Dendritic cell treated with granulocyte-macrophage colony-stimulating factor and Interleukin-4, amounts not matched to agents 40 ng/mL and 50 ng/mL, for 4 days (primary cell): ENCODE measurements at regions of chr19 and their contacts with region 1.

Region 1: GRCh38 chr19:18919086-18919899 is at the starts of genes COPE and DDX49:
- H3K4me3 Mint-ChIP-seq: peak within 1 kb of the TSS; percentile 86
- H3K27ac Mint-ChIP-seq: peak within 1 kb of the TSS; percentile 96
- H3K4me1 Mint-ChIP-seq: peaks cover 46% of the 10 kb centered on the region
- H3K27me3 Mint-ChIP-seq: no peaks in the 10 kb centered on the region

Region 2: DNA sequence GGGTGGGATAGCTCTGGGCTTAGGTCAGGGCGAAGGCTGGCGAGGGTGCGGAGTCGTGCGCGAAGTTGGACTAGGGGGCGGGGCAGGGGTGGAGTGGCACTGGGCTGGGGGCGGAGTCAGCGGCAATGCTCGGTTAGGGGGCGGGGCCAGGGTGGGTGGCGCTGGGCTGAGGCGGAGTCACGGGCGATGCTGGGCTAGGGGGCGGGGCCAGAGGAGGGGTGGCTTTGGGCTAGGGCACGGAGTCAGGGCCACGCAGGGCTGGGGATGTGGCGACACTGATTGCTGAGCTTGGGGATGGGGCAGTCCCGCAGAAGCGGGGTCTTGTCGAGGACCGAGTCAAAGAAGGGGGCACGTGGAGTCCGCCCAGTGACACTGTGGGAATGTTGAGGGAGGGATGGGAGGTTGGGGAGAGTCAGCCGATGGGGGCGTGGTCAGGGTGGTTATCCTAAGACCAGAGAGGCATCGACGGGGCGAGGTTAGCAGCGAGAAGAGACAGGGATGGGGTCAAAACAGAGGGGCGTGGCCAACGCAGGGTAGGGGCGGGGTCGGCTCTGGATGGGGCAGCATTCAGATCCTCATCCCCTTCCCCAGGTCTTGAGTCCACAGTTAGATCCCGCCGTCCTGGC is 13.0 kb after region 1 on chr19:
- intact Hi-C with region 1: loop called (anchors 1 kb)
- H3K4me3 Mint-ChIP-seq: peak overlapping the region; percentile 84
- H3K27ac Mint-ChIP-seq: peak overlapping the region; percentile 60
- H3K4me1 Mint-ChIP-seq: peaks cover 23% of the 10 kb centered on the region
- H3K27me3 Mint-ChIP-seq: no peaks in the 10 kb centered on the region

Region 3: GRCh38 chr19:18967358-18968146 is 48.3 kb after region 1 on chr19:
- intact Hi-C with region 1: loop called (anchors 1 kb)
- H3K4me3 Mint-ChIP-seq: peak overlapping the region; percentile 42
- H3K27ac Mint-ChIP-seq: peak overlapping the region; percentile 96
- H3K4me1 Mint-ChIP-seq: peaks cover 53% of the 10 kb centered on the region
- H3K27me3 Mint-ChIP-seq: no peaks in the 10 kb centered on the region

Region 4: DNA sequence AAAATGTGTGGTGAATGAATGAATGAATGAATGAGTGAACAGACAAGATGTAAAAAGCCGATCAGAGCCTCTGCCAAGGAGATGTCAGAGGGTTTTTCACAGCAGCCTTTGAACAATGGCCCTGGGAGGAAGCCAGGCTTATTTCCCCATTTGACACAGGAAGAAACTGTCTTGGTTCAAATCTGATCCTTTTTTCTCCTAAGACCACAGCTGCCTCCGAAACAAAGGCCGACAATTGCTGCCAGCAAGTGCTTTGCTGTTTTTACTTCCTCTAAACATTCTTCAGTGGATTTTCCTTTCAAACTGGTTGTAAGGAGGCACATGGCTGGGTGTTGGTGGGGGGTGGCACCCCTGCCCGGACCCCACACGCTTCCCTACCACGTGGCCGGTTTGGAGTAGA is 66.0 kb after region 1 on chr19:
- intact Hi-C with region 1: loop called (anchors 5 kb)
- H3K4me3 Mint-ChIP-seq: peak overlapping the region; percentile 50
- H3K27ac Mint-ChIP-seq: peak overlapping the region; percentile 84
- H3K4me1 Mint-ChIP-seq: peaks cover 31% of the 10 kb centered on the region
- H3K27me3 Mint-ChIP-seq: no peaks in the 10 kb centered on the region